ENCODE measurements at regions of chrX and their contacts with region 1.

Region 1: GRCh38 chrX:47030339-47030738 is 47.9 kb upstream of the RGN start:
- DNase-seq: peak; percentile 3
- ATAC-seq: no peak
- H3K4me3 Mint-ChIP-seq: no peak overlapping the region
- H3K27ac Mint-ChIP-seq: no peak overlapping the region
- H3K4me1 Mint-ChIP-seq: no peaks in the 10 kb centered on the region
- H3K27me3 Mint-ChIP-seq: no peaks in the 10 kb centered on the region

Region 2: GRCh38 chrX:46531442-46531841 is 498.9 kb before region 1 on chrX:
- CTCF ChIA-PET with region 1: no interaction called
- POLR2A ChIA-PET with region 1: no interaction called
- intact Hi-C with region 1: no loop called
- DNase-seq: no peak
- ATAC-seq: no peak
- H3K4me3 Mint-ChIP-seq: no peak overlapping the region
- H3K27ac Mint-ChIP-seq: no peak overlapping the region
- H3K4me1 Mint-ChIP-seq: no peaks in the 10 kb centered on the region
- H3K27me3 Mint-ChIP-seq: no peaks in the 10 kb centered on the region

Region 3: GRCh38 chrX:46903458-46904242 is 126.7 kb before region 1 on chrX:
- CTCF ChIA-PET with region 1: no interaction called
- POLR2A ChIA-PET with region 1: no interaction called
- intact Hi-C with region 1: loop called in 1 of 2 experiments (anchors 2 kb)
- DNase-seq: peak; percentile 73
- ATAC-seq: peak; percentile 98
- H3K4me3 Mint-ChIP-seq: peak overlapping the region; percentile 46
- H3K27ac Mint-ChIP-seq: no peak overlapping the region
- H3K4me1 Mint-ChIP-seq: peaks cover 2% of the 10 kb centered on the region
- H3K27me3 Mint-ChIP-seq: peaks cover 3% of the 10 kb centered on the region

Region 4: GRCh38 chrX:46912098-46912602 is 118.2 kb before region 1 on chrX and contains the start of gene JADE3:
- CTCF ChIA-PET with region 1: interaction called, 3 read pairs
- POLR2A ChIA-PET with region 1: no interaction called
- intact Hi-C with region 1: loop called (anchors 2 to 5 kb)
- DNase-seq: peak; percentile 47
- ATAC-seq: peak; percentile 24
- H3K4me3 Mint-ChIP-seq: peak within 1 kb of the TSS; percentile 71
- H3K27ac Mint-ChIP-seq: no peak within 1 kb of the TSS
- H3K4me1 Mint-ChIP-seq: peaks cover 10% of the 10 kb centered on the region
- H3K27me3 Mint-ChIP-seq: peaks cover 31% of the 10 kb centered on the region
- total RNA-seq, gene JADE3: 1.5 to 2.7 TPM

Region 5: GRCh38 chrX:47683146-47683828 is 652.9 kb after region 1 on chrX:
- CTCF ChIA-PET with region 1: no interaction called
- POLR2A ChIA-PET with region 1: no interaction called
- intact Hi-C with region 1: no loop called
- DNase-seq: no peak
- ATAC-seq: no peak
- H3K4me3 Mint-ChIP-seq: no peak overlapping the region
- H3K27ac Mint-ChIP-seq: no peak overlapping the region
- H3K4me1 Mint-ChIP-seq: no peaks in the 10 kb centered on the region
- H3K27me3 Mint-ChIP-seq: peaks cover 1% of the 10 kb centered on the region